ENCODE measurements at regions of chr12 and their contacts with region 1.

Region 1: GRCh38 chr12:54379401-54380201 is 4.9 kb downstream of the ZNF385A start:
- DNase-seq: peak; percentile 96
- H3K4me3 ChIP-seq: peak overlapping the region; percentile 54 to 63
- H3K27ac ChIP-seq: peak overlapping the region in 1 of 2 experiments; percentile 60; a peak in 3 of 4 replicates
- H3K4me1 ChIP-seq: peaks cover 0 to 30% of the 10 kb centered on the region in 2 experiments; a peak in 1 of 4 replicates
- H3K27me3 ChIP-seq: no peaks in the 10 kb centered on the region
- CTCF ChIP-seq: peak; percentile 100
- EP300 ChIP-seq: no peak
- RAD21 ChIP-seq: peak; percentile 89

Region 2: DNA sequence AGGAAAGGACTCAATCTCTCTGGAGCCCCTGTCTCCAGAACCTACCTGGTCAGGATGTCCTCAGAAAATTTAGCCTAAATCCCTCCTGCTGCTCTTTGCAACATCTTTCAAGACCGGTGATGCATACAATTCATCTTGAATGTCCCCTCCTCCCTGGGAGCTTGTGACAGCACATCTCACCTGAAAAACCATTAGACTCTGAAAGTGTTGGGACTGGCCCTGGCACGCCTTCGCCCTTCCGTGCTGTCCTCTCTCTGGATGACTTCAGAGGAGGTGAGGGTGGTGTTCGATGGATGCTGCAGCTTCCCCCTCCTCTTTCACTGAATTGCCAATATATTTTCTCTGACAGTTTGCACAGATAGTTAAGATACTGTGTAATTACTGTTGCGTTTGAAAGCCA is 536.9 kb before region 1 on chr12:
- CTCF ChIA-PET with region 1: no interaction called
- POLR2A ChIA-PET with region 1: no interaction called
- DNase-seq: no peak
- H3K4me3 ChIP-seq: no peak overlapping the region
- H3K27ac ChIP-seq: no peak overlapping the region
- H3K4me1 ChIP-seq: no peaks in the 10 kb centered on the region
- H3K27me3 ChIP-seq: peaks cover 61% of the 10 kb centered on the region; the same call in 1 of the 2 replicates
- CTCF ChIP-seq: no peak
- EP300 ChIP-seq: no peak
- RAD21 ChIP-seq: no peak

Region 3: GRCh38 chr12:53984901-53985709 is 394.5 kb before region 1 on chr12 and contains the start of gene HOXC10:
- CTCF ChIA-PET with region 1: interaction called, 10 read pairs
- POLR2A ChIA-PET with region 1: no interaction called
- DNase-seq: peak; percentile 97
- H3K4me3 ChIP-seq: peak within 1 kb of the TSS; percentile 41 to 52; a peak in 3 of 4 replicates
- H3K27ac ChIP-seq: no peak within 1 kb of the TSS
- H3K4me1 ChIP-seq: peaks cover 0 to 12% of the 10 kb centered on the region in 2 experiments; a peak in 1 of 4 replicates
- H3K27me3 ChIP-seq: peaks cover 95% of the 10 kb centered on the region
- CTCF ChIP-seq: peak; percentile 80
- EP300 ChIP-seq: no peak
- RAD21 ChIP-seq: peak; percentile 88
- polyA plus RNA-seq, gene HOXC10: 0.03 and 0.08 TPM in 2 replicates

Region 4: DNA sequence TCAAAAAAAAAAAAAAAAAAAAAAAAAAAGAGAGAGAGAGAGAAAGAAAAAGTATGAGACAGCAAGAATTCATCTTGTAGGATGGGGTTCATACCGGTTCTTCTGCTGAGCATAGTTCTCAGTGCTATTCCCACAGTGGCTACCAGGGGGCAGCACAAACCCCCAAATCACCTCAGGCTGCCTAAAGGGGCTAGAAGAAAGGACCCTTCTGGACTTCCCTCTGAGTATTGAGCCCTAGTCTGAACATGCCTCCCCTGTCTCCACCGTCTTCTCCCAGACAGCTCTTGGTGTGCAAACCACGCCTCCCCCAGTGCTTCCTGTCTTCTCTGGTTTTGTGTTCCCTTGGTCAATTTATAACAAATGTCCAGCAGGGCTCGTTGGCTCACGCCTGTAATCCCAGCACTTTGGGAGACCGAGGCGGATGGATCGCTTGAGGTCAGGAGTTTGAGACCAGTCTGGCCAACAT is 159.5 kb before region 1 on chr12:
- CTCF ChIA-PET with region 1: interaction called, 38 read pairs
- POLR2A ChIA-PET with region 1: no interaction called
- DNase-seq: peak; percentile 75
- H3K4me3 ChIP-seq: no peak overlapping the region; a peak in 1 of 4 replicates
- H3K27ac ChIP-seq: no peak overlapping the region
- H3K4me1 ChIP-seq: peaks cover 3 to 14% of the 10 kb centered on the region in 2 experiments; a peak in 3 of 4 replicates
- H3K27me3 ChIP-seq: no peaks in the 10 kb centered on the region
- CTCF ChIP-seq: peak; percentile 88
- EP300 ChIP-seq: no peak
- RAD21 ChIP-seq: peak; percentile 84

Region 5: DNA sequence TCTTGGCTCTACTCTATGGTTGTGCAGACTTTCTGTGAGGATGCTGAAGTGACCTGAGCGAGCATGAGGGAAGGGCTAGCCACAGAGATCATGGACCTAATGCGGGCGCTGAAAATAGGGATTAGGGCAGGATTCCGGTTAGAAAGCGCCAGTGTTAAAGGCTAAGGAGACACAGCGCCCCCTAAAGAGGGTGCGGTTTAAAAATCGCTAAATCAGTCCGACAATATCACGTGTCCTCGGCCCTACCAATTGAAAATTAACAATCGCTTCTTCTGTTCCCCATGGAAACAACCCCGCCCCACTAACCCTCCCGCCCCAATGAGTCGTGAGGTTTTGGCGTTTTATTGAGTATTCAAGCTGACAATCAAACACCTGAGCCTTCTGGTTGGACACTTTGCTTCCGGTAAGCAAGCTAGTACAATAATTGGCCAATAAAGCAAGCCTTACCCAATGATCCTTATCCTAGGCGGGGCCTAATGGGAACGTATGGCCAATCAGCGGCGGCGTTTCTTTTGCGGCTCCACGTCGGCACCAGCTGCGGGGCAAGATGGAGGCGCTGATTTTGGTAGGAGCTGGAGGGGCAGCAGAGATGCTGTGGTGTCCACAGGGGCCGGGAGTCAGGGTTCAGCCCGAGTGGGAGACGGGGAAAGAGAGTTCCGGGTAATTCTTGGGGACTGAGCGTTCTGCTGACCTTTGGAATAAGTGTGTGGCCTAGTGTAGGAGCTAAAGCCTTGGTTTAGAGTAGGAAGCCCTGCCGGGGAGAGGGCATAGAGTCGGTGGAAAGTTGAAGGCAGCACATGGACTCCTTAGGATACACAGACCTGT is 54.8 kb before region 1 on chr12 and contains the start of gene COPZ1:
- CTCF ChIA-PET with region 1: interaction called, 17 read pairs
- POLR2A ChIA-PET with region 1: no interaction called
- DNase-seq: peak; percentile 90
- H3K4me3 ChIP-seq: peak within 1 kb of the TSS; percentile 68 to 86
- H3K27ac ChIP-seq: peak within 1 kb of the TSS; percentile 77 to 81
- H3K4me1 ChIP-seq: peaks cover 0 to 9% of the 10 kb centered on the region in 2 experiments; a peak in 2 of 4 replicates
- H3K27me3 ChIP-seq: no peaks in the 10 kb centered on the region
- CTCF ChIP-seq: peak; percentile 84
- EP300 ChIP-seq: 0 out of 4 replicates have a peak, but pooled peaks of 1 of the 2 experiments have one; percentile 35
- RAD21 ChIP-seq: peak; percentile 80
- polyA plus RNA-seq, gene COPZ1: 111 and 156 TPM in 2 replicates

Region 6: GRCh38 chr12:54359033-54359761 is 20.4 kb before region 1 on chr12:
- CTCF ChIA-PET with region 1: interaction called, 118 read pairs
- POLR2A ChIA-PET with region 1: no interaction called
- DNase-seq: peak; percentile 91
- H3K4me3 ChIP-seq: peak overlapping the region; percentile 55 to 76
- H3K27ac ChIP-seq: peak overlapping the region; percentile 79 to 99
- H3K4me1 ChIP-seq: peaks cover 27 to 47% of the 10 kb centered on the region in 2 experiments
- H3K27me3 ChIP-seq: no peaks in the 10 kb centered on the region
- CTCF ChIP-seq: no peak
- EP300 ChIP-seq: peak; percentile 68 to 89; a peak in 3 of 4 replicates
- RAD21 ChIP-seq: no peak

Region 7: GRCh38 chr12:54398995-54399793 is 19.6 kb after region 1 on chr12:
- CTCF ChIA-PET with region 1: interaction called, 53 read pairs
- POLR2A ChIA-PET with region 1: no interaction called
- DNase-seq: peak; percentile 89
- H3K4me3 ChIP-seq: no peak overlapping the region; a peak in 1 of 4 replicates
- H3K27ac ChIP-seq: no peak overlapping the region
- H3K4me1 ChIP-seq: no peaks in the 10 kb centered on the region
- H3K27me3 ChIP-seq: no peaks in the 10 kb centered on the region
- CTCF ChIP-seq: peak; percentile 99
- EP300 ChIP-seq: no peak
- RAD21 ChIP-seq: peak; percentile 88

Region 8: GRCh38 chr12:54509617-54510016 is 130.0 kb after region 1 on chr12:
- CTCF ChIA-PET with region 1: no interaction called
- POLR2A ChIA-PET with region 1: no interaction called
- DNase-seq: no peak
- H3K4me3 ChIP-seq: no peak overlapping the region
- H3K27ac ChIP-seq: no peak overlapping the region
- H3K4me1 ChIP-seq: no peaks in the 10 kb centered on the region
- H3K27me3 ChIP-seq: peaks cover 13% of the 10 kb centered on the region; the same call in 1 of the 2 replicates
- CTCF ChIP-seq: no peak
- EP300 ChIP-seq: no peak
- RAD21 ChIP-seq: no peak

Measured in SK-N-SH (cell line).